AG04450 (cell line): ENCODE measurements at regions of chr6 and their contacts with region 1.

Region 1: GRCh38 chr6:85323435-85324040 is 126.3 kb upstream of the NT5E start:
- DNase-seq: peak; percentile 46
- H3K4me3 ChIP-seq: no peak overlapping the region
- H3K27ac ChIP-seq: no peak overlapping the region
- H3K27me3 ChIP-seq: peaks cover 11% of the 10 kb centered on the region
- CTCF ChIP-seq: peak; percentile 92

Region 2: GRCh38 chr6:84227434-84228197 is 1095.9 kb before region 1 on chr6 and contains the start of gene CEP162:
- CTCF ChIA-PET with region 1: interaction called, 10 read pairs
- POLR2A ChIA-PET with region 1: no interaction called
- DNase-seq: peak; percentile 57
- H3K4me3 ChIP-seq: peak within 1 kb of the TSS; percentile 96
- H3K27ac ChIP-seq: peak within 1 kb of the TSS; percentile 68
- H3K27me3 ChIP-seq: no peaks in the 10 kb centered on the region
- CTCF ChIP-seq: peak; percentile 81
- polyA plus RNA-seq, gene CEP162: 2.4 and 5.3 TPM in 2 replicates

Region 3: GRCh38 chr6:84428300-84428907 is 895.1 kb before region 1 on chr6:
- CTCF ChIA-PET with region 1: interaction called, 50 read pairs
- POLR2A ChIA-PET with region 1: no interaction called
- DNase-seq: no peak
- H3K4me3 ChIP-seq: no peak overlapping the region
- H3K27ac ChIP-seq: no peak overlapping the region
- H3K27me3 ChIP-seq: peaks cover 8% of the 10 kb centered on the region
- CTCF ChIP-seq: peak; percentile 85

Region 4: DNA sequence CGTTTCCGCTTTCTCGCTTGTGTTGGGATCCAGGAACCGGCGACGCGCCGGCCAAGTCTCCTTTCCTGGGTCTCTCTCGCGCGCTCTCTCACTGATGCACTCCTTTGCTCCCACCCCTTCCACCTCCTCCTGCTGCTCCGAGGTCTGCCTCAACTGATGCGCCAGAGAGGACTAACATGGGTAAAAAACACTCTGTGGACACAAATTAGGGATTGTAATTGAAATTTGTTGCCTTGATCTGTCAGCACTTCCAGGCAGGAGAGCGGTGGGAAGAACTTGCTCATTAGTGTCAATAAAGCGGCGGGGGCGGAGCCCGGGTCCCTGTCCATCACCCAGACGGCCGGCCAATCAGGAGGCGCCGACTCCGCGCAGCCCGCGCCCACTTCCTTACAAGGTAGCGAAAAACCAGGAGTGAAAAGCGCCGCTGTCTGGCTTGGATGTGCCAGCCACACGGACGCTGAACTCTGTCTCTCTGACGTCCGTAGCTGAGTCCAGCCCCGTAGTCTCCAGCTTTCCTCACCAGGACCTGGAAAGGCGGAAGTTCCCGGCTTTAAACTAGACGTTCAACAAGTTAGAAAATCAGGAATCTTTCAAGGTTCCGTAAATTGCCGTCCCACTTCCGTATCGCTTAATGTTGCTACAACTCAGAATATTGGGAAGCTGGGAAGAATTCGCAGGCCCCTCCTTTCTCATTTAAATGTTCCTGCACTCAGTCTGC is 559.0 kb before region 1 on chr6 and contains the start of gene TBX18:
- CTCF ChIA-PET with region 1: no interaction called
- POLR2A ChIA-PET with region 1: no interaction called
- DNase-seq: peak; percentile 53
- H3K4me3 ChIP-seq: peak within 1 kb of the TSS; percentile 59
- H3K27ac ChIP-seq: no peak within 1 kb of the TSS
- H3K27me3 ChIP-seq: peaks cover 68% of the 10 kb centered on the region
- CTCF ChIP-seq: no peak; the same call in 1 of the 2 replicates
- polyA plus RNA-seq, gene TBX18: 0.42 and 0.69 TPM in 2 replicates

Region 5: DNA sequence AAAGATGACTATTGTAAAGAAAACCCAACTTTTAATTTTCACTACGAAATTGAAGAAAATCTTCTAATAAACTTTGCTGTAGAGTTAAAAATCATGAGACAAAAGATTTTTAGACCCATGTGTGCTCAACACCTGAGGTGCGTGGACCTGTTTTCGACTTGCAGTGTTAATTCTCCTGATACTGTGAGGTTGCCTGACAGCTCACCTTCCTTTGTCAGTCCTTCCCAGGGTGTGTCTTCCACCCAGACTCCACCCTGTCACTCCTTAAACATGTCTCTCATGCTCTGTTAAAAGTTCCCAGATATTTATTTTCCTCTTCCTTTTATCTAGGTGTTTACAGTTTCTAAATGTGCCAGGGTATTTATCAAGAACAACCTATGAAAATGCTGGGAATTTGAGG is 25.0 kb before region 1 on chr6:
- CTCF ChIA-PET with region 1: interaction called, 11 read pairs
- POLR2A ChIA-PET with region 1: no interaction called
- DNase-seq: no peak
- H3K4me3 ChIP-seq: no peak overlapping the region
- H3K27ac ChIP-seq: no peak overlapping the region
- H3K27me3 ChIP-seq: no peaks in the 10 kb centered on the region
- CTCF ChIP-seq: no peak

Region 6: DNA sequence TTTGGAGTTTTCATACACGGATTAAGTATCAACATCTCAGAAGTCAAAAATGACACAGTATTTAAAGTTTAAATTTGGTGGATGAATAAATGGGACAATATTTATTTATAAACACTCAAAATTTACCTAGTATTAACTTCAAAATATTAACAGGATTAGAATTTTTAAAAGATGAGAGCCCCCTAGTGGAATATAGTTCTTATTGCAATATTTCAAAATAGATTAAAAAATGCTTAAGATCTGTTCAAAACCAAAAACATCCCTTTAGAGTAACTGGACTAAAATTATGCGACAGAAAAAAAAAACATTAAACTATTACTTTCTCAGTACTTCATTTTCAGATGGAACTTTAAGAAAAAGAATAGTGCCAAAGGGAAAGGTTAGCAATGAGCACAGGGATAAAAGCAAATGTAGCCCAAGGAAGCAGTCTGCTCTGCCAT is 213.5 kb after region 1 on chr6:
- CTCF ChIA-PET with region 1: interaction called, 23 read pairs
- POLR2A ChIA-PET with region 1: no interaction called
- DNase-seq: no peak
- H3K4me3 ChIP-seq: no peak overlapping the region
- H3K27ac ChIP-seq: no peak overlapping the region
- H3K27me3 ChIP-seq: no peaks in the 10 kb centered on the region
- CTCF ChIP-seq: peak; percentile 42